Stomach (tissue), 19 donors: ENCODE measurements at regions of chr17 and their contacts with region 1.

Region 1: DNA sequence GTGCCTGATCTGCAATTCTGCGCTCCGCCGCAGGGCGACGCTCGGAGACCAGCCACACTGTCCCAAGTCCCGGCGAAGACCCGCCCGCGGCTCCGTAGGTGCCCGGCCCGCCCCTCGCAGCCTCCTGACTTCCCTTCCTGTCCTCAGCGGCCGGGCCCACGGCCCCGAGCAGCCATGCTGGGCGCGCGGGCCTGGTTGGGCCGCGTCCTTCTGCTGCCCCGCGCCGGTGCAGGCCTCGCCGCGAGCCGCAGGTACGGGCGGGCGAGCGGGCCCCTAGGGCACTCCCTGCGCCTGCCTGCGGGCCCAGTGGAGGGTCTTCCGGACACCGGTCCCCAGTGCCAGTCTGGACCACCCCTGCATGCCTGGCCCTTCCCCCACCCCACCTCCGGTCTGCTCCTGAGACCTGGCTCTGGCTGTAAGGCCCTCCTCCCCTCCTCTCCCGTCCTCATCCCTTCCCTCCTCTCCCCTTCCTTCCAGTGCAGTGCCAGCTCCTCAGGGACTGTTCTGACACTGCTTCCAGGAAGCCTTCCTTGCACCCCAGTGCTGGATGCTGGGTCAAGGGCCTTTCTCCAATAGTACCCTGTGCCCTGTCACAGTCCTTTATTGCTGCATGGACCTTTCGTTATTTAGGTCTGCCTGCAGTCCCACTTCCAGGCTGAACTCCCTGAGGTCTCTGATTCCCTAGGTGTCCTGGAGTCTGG is at the start of gene SPATA20:
- DNase-seq: peak; percentile 95 to 97
- H3K4me3 ChIP-seq: peak within 1 kb of the TSS; percentile 52 to 64 (median 60)
- H3K27ac ChIP-seq: peak within 1 kb of the TSS; percentile 82 to 91 (median 88)
- H3K4me1 ChIP-seq: peaks cover 34 to 73% (median 56%) of the 10 kb centered on the region in 4 donors
- H3K27me3 ChIP-seq: no peaks in the 10 kb centered on the region
- CTCF ChIP-seq: peak in 5 of 7 experiments; percentile 94 to 98 (median 97)
- EP300 ChIP-seq: no peak
- POLR2A ChIP-seq: peak in 1 of 4 donors; percentile 22
- total RNA-seq, gene SPATA20: 45.0 to 1,214 (median 194) TPM

Region 2: DNA sequence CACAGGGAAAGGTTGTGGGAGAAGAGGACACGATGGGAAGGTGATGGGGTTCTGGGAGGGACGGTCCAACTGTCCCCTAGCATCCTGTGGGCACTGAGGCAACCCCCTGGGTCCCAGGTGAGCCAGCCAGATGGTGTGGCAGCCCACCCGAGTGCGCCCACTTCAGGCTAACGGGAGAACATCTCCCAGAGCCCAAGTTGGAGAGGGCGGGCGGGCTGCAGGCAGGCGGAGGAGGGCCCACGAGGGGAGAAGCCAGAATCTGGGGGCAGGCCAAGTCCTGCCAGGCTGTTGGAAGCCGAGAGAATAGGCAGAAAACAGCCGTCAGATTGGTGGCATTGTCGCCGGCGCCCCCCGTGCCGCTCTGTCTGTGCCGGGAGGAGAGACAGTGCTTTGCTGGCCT is 73.7 kb after region 1 on chr17:
- intact Hi-C with region 1: loop called (anchors 5 kb)
- DNase-seq: no peak
- H3K4me3 ChIP-seq: no peak overlapping the region
- H3K27ac ChIP-seq: no peak overlapping the region
- H3K4me1 ChIP-seq: peaks cover 0 to 10% (median 2%) of the 10 kb centered on the region in 4 donors
- H3K27me3 ChIP-seq: peaks cover 0 to 27% (median 0%) of the 10 kb centered on the region in 3 donors
- CTCF ChIP-seq: no peak
- EP300 ChIP-seq: no peak
- POLR2A ChIP-seq: no peak

Region 3: DNA sequence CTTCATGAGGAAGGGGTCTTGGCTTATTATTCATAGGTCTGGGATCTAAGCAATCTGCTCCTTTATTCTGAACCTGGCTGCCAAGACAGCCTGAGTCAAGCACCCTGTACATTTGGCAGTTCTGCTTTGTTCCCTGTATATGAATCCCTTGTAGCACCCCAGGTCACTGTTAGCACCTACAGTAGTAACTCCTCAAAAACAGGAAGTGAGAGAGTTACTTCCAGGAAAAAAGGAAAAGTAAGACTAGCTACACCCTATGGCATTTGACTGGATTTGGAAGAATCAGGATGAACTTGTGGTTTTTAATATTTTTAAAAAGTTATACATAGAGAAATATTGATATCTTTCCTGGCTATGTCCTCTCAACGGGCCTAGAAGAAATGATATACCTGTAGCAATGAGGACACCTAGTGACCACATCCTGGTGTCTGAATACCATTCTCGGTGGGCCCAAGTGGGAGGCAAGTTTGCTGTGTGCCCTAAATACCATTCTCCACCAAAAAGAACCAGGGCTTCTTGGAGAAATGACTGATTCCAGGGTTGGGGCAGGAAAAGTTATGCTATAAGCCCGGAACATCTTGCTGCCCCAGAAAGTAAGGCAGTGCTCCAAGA is 150.6 kb after region 1 on chr17:
- intact Hi-C with region 1: loop called (anchors 5 kb)
- DNase-seq: peak in 1 of 2 donors; percentile 50
- H3K4me3 ChIP-seq: no peak overlapping the region
- H3K27ac ChIP-seq: peak overlapping the region; percentile 23 to 95 (median 86)
- H3K4me1 ChIP-seq: peaks cover 23 to 87% (median 53%) of the 10 kb centered on the region in 4 donors
- H3K27me3 ChIP-seq: no peaks in the 10 kb centered on the region
- CTCF ChIP-seq: no peak
- EP300 ChIP-seq: no peak
- POLR2A ChIP-seq: no peak